CD4-positive, alpha-beta T cell (primary cell): ENCODE measurements at regions of chr7 and their contacts with region 1.

Region 1: GRCh38 chr7:107799647-107800264 is 3.3 kb downstream of the SLC26A3 start:
- DNase-seq: no peak
- ATAC-seq: no peak
- H3K4me3 ChIP-seq: no peak overlapping the region
- H3K4me3 Mint-ChIP-seq: no peak overlapping the region
- H3K27ac ChIP-seq: no peak overlapping the region
- H3K27ac Mint-ChIP-seq: no peak overlapping the region
- H3K4me1 ChIP-seq: no peaks in the 10 kb centered on the region
- H3K4me1 Mint-ChIP-seq: no peaks in the 10 kb centered on the region
- H3K27me3 ChIP-seq: no peaks in the 10 kb centered on the region
- H3K27me3 Mint-ChIP-seq: no peaks in the 10 kb centered on the region
- CTCF ChIP-seq: no peak

Region 2: GRCh38 chr7:107694386-107694785 is 105.4 kb before region 1 on chr7:
- CTCF ChIA-PET with region 1: no interaction called
- POLR2A ChIA-PET with region 1: no interaction called
- intact Hi-C with region 1: no loop called
- DNase-seq: no peak
- ATAC-seq: no peak
- H3K4me3 ChIP-seq: no peak overlapping the region
- H3K4me3 Mint-ChIP-seq: no peak overlapping the region
- H3K27ac ChIP-seq: no peak overlapping the region
- H3K27ac Mint-ChIP-seq: no peak overlapping the region
- H3K4me1 ChIP-seq: no peaks in the 10 kb centered on the region
- H3K4me1 Mint-ChIP-seq: no peaks in the 10 kb centered on the region
- H3K27me3 ChIP-seq: peaks cover 0 to 7% of the 10 kb centered on the region in 2 experiments
- H3K27me3 Mint-ChIP-seq: peaks cover 18% of the 10 kb centered on the region
- CTCF ChIP-seq: no peak

Region 3: DNA sequence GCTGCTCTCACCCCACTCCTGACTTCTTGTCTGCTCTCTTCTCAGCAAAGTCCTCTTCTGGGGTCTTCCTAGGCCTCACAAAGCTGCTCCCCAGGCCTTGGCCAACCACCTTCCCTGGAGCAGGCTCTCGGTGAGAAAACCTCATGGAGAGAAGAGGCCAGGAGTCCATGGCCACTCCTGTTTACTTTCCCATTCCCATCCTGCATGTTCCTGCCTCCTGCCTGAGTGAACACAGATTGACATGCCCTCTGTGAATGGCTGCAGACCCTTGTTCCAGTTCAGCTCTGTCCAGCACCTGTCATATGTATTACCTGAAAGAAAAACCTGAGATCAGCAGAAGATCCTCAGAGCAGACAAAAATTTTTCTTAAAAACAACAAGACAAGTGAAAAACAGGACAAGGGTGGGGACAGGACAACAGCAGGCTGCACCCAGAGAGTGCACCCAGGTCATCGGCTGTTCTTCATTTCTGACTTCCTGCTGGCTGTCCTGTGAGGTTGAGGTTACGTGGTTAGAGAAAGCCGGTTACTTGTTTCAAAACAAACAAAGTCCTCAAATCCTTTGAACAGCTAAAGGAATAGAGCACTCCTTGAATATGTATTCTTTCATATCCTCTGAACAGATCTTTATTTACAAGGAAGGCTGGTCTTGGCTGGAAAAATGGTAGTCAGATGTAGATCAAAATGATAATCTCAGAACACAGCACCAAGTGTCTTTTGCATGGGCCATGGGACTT is 57.2 kb after region 1 on chr7:
- CTCF ChIA-PET with region 1: no interaction called
- POLR2A ChIA-PET with region 1: no interaction called
- intact Hi-C with region 1: loop called in 1 of 2 experiments (anchors 10 kb)
- DNase-seq: peak in 10 of 14 experiments; percentile 13 to 76 (median 30)
- ATAC-seq: peak; percentile 87
- H3K4me3 ChIP-seq: no peak overlapping the region
- H3K4me3 Mint-ChIP-seq: peak overlapping the region; percentile 43
- H3K27ac ChIP-seq: peak overlapping the region; percentile 6 to 76
- H3K27ac Mint-ChIP-seq: peak overlapping the region; percentile 87
- H3K4me1 ChIP-seq: peaks cover 40% of the 10 kb centered on the region
- H3K4me1 Mint-ChIP-seq: peaks cover 79% of the 10 kb centered on the region
- H3K27me3 ChIP-seq: no peaks in the 10 kb centered on the region
- H3K27me3 Mint-ChIP-seq: no peaks in the 10 kb centered on the region
- CTCF ChIP-seq: no peak

Region 4: DNA sequence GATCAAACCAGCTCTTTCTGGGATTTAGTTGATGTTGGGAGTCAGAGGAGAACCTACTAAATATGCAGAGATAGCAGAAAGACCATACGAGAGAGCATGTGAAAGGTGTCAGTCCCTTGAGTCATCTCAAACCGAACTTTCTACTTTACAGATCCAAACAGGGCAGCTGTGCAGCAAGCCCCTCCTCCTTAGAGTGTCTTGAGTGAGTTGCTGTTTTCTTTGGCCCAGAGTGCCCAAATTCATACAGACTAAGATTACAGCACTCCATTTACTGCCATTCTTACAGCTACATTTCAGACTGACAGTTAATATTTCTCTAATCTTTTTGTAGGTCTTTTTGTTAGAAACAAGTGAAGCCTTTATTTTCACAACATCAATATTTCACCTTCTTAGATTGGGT is 603.1 kb after region 1 on chr7:
- CTCF ChIA-PET with region 1: no interaction called
- POLR2A ChIA-PET with region 1: no interaction called
- intact Hi-C with region 1: no loop called
- DNase-seq: no peak
- ATAC-seq: no peak
- H3K4me3 ChIP-seq: no peak overlapping the region
- H3K4me3 Mint-ChIP-seq: no peak overlapping the region
- H3K27ac ChIP-seq: no peak overlapping the region
- H3K27ac Mint-ChIP-seq: no peak overlapping the region
- H3K4me1 ChIP-seq: no peaks in the 10 kb centered on the region
- H3K4me1 Mint-ChIP-seq: no peaks in the 10 kb centered on the region
- H3K27me3 ChIP-seq: peaks cover 4 to 6% of the 10 kb centered on the region in 2 experiments
- H3K27me3 Mint-ChIP-seq: peaks cover 8% of the 10 kb centered on the region
- CTCF ChIP-seq: no peak